Endothelial cell of umbilical vein (primary cell): ENCODE measurements at regions of chr18 and their contacts with region 1.

Region 1: GRCh38 chr18:80171054-80171872 is 62.2 kb downstream of the ADNP2 start:
- DNase-seq: peak; percentile 12
- H3K4me3 ChIP-seq: no peak overlapping the region
- H3K27ac ChIP-seq: no peak overlapping the region
- H3K4me1 ChIP-seq: no peaks in the 10 kb centered on the region
- H3K27me3 ChIP-seq: no peaks in the 10 kb centered on the region
- CTCF ChIP-seq: peak; percentile 88 to 92
- POLR2A ChIP-seq: no peak

Region 2: DNA sequence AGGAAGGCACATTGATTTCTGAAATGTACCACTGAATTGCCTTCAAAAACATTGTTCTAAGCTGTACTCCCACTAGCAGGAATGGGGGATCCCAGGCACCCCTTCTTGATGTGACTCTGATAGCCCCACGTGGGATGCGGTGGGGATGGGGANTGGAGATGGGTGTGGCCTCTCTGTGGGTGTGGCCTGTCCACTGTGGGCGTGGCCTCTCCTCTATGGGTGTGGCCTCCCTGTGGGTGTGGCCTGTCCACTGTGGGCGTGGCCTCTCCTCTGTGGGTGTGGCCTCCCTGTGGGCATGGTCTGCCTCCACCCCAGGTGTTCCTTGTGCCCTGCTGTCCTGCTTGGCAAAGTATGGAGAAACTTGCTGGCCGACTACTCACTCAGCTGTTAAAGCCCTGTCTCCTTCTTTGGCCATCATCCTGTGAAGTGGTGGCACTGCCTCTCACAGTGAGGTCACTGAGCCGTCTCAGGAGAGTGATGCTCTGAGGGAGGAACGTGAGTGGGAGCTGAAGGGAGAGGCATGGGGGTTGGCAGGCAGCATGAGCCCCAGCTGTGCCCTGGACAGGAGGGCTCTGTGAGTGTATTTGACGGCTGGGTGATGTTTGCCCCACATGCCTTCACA is 82.7 kb after region 1 on chr18:
- CTCF ChIA-PET with region 1: interaction called, 26 read pairs
- POLR2A ChIA-PET with region 1: no interaction called
- dilution Hi-C with region 1: no loop called
- intact Hi-C with region 1: loop called (anchors 1 kb)
- DNase-seq: no peak
- H3K4me3 ChIP-seq: no peak overlapping the region
- H3K27ac ChIP-seq: no peak overlapping the region
- H3K4me1 ChIP-seq: no peaks in the 10 kb centered on the region
- H3K27me3 ChIP-seq: peaks cover 7 to 8% of the 10 kb centered on the region in 2 experiments
- CTCF ChIP-seq: no peak
- POLR2A ChIP-seq: no peak